ENCODE measurements at regions of chr14 and their contacts with region 1.

Region 1: GRCh38 chr14:73949744-73950734 is at the starts of genes COQ6 and FAM161B:
- DNase-seq: peak; percentile 89 to 97
- ATAC-seq: peak; percentile 97
- H3K4me3 ChIP-seq: peak within 1 kb of the TSS; percentile 68
- H3K27ac ChIP-seq: peak within 1 kb of the TSS; percentile 79 to 91
- H3K4me1 ChIP-seq: peaks cover 6% of the 10 kb centered on the region; the same call in 2 of the 3 replicates
- CTCF ChIP-seq: no peak
- EP300 ChIP-seq: no peak
- POLR2A ChIP-seq: peak; percentile 91
- RAD21 ChIP-seq: 0 out of 5 replicates have a peak, but pooled peaks of 1 of the 2 experiments have one; percentile 17
- polyA plus RNA-seq, gene COQ6: 41.9 and 46.4 TPM in 2 replicates
- polyA plus RNA-seq, gene FAM161B: 1.6 TPM in 2 replicates

Region 2: GRCh38 chr14:72855913-72856312 is 1094.1 kb before region 1 on chr14:
- CTCF ChIA-PET with region 1: no interaction called
- POLR2A ChIA-PET with region 1: no interaction called
- DNase-seq: no peak
- ATAC-seq: no peak
- H3K4me3 ChIP-seq: no peak overlapping the region
- H3K27ac ChIP-seq: no peak overlapping the region
- H3K4me1 ChIP-seq: no peaks in the 10 kb centered on the region
- CTCF ChIP-seq: no peak
- EP300 ChIP-seq: no peak
- POLR2A ChIP-seq: no peak
- RAD21 ChIP-seq: no peak

Region 3: GRCh38 chr14:74018586-74019407 is 68.8 kb after region 1 on chr14 and contains the starts of genes BBOF1 and ENTPD5:
- CTCF ChIA-PET with region 1: interaction called, 5 read pairs
- POLR2A ChIA-PET with region 1: interaction called, 12 read pairs
- DNase-seq: peak; percentile 83 to 93
- ATAC-seq: peak; percentile 92 to 94
- H3K4me3 ChIP-seq: peak within 1 kb of the TSS; percentile 84
- H3K27ac ChIP-seq: peak within 1 kb of the TSS; percentile 95 to 96
- H3K4me1 ChIP-seq: peaks cover 33% of the 10 kb centered on the region
- CTCF ChIP-seq: no peak
- EP300 ChIP-seq: no peak
- POLR2A ChIP-seq: peak; percentile 91
- RAD21 ChIP-seq: no peak
- polyA plus RNA-seq, gene BBOF1: 3.4 and 4.9 TPM in 2 replicates
- polyA plus RNA-seq, gene ENTPD5: 17.4 and 19.3 TPM in 2 replicates

Measured in A549 (cell line).